ENCODE measurements at regions of chr1 and their contacts with region 1.

Region 1: DNA sequence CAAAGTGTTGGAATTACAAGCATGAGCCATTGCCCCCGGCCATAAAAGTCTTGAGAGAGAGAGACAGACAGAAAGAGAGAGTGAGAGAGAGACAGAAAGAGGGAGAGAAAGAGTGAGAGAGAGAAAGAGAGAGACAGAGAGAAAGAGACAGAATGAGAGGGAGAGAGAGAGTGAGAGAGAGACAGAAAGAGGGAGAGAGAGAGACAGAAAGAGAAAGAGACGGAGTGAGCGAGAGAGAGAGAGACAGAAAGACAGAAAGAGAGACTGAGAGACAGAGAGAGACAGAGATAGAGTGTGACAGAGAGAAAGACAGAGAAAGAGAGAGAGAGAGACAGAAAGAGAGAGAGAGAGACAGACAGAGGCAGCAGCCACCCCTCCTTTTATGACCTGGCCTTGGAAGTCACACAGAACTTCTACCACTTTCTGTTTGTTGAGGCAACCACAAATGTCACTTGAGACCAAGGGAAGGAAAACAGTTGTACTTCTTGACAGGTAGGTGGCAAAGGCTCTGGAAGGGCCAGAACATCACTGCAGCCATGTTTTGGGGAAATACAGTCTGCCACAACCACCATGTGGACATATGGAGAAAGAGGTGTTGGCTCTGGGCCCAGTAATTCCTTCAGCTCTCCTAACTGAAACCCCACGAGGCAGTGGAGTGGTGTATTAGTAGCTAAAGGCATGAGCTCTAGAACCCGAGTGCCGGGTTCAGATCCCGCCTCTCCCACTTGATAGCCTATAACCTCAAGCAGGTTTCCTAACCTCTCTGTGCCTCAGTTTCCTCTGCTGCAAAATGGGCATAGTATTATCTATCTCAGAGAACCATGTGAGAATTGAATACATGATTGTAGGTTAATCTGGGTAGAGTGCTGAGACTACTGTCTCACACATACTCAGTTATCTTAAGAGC is 50.6 kb downstream of the TNFRSF8 start:
- DNase-seq: no peak
- H3K4me3 ChIP-seq: no peak overlapping the region
- H3K4me3 Mint-ChIP-seq: no peak overlapping the region
- H3K27ac ChIP-seq: no peak overlapping the region
- H3K27ac Mint-ChIP-seq: no peak overlapping the region
- H3K4me1 ChIP-seq: peaks cover 4% of the 10 kb centered on the region
- H3K4me1 Mint-ChIP-seq: peaks cover 4 to 12% (median 8%) of the 10 kb centered on the region in 4 donors
- H3K27me3 ChIP-seq: no peaks in the 10 kb centered on the region
- H3K27me3 Mint-ChIP-seq: no peaks in the 10 kb centered on the region

Region 2: DNA sequence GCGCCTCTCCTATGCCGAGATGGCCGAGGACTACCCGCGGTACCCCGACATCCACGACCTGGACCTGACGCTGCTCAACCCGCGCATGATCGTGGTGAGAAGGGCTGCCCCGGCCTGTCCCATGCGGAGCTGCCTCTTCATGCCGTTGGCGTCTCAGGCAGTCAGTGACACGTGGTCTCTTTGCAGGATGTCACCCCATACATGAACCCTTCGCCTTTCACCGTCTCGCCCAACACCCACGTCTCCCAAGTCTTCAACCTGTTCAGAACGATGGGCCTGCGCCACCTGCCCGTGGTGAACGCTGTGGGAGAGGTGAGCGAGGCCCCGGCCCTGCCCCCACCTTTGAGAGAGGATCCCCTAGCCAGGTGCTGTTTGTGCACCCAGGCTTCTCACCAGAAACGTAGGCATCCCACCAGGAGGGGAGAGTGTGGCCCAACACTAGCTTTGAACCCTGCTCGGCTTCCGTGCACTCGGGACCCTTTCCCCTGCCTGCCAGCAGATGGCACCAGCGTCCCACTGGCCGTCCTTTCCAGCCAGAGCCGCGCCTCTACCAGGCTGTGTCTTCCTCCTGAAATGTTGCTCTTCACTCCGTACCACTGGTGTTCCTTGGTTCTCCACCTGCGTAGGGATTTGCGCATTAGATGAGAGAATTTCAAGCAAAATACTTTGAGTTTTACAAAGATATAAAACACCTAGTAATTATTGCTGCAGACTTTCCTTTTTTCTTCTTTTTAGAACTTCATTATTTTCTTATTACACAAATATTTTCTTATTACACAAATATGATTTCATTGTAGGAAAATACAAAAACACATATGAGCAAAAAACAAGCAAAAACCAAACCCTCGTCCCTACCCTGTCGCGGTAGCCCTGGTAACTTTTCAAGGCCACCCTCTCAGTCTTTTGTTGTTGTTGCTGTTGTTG is 275.1 kb before region 1 on chr1:
- CTCF ChIA-PET with region 1: no interaction called
- POLR2A ChIA-PET with region 1: no interaction called
- intact Hi-C with region 1: loop called (anchors 5 kb)
- DNase-seq: peak; percentile 65 to 74 (median 72)
- H3K4me3 ChIP-seq: no peak overlapping the region
- H3K4me3 Mint-ChIP-seq: no peak overlapping the region
- H3K27ac ChIP-seq: no peak overlapping the region
- H3K27ac Mint-ChIP-seq: peak overlapping the region in 1 of 7 donors; percentile 24
- H3K4me1 ChIP-seq: peaks cover 3% of the 10 kb centered on the region
- H3K4me1 Mint-ChIP-seq: peaks cover 2 to 6% (median 4%) of the 10 kb centered on the region in 4 donors
- H3K27me3 ChIP-seq: no peaks in the 10 kb centered on the region
- H3K27me3 Mint-ChIP-seq: no peaks in the 10 kb centered on the region

Region 3: DNA sequence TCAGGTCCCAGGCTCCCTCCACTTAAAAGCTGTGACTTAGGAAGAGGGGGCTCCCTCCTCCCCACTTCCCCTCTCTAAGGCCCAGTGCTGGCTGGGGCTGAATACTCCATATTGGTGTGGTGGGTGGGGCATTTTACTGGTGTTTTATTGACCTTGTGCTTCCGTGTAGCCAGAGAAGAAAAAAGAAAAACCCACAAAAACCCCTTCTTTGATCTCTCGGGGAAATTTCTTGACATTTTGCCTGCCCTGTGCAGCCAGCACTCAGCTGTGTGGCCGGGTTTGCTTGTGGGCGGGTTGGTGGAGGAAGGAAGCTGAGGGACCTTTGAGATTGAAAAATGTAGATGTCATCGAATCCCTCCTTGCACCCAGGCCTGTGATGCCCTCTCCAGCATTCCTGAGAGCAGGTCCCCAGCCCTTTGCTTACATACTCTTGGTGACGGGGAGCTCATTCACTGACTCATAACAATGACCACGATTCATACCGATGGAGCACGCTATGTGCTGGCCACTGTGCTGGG is 25.8 kb before region 1 on chr1:
- CTCF ChIA-PET with region 1: no interaction called
- POLR2A ChIA-PET with region 1: no interaction called
- intact Hi-C with region 1: loop called (anchors 1 kb)
- DNase-seq: peak; percentile 56 to 68 (median 60)
- H3K4me3 ChIP-seq: peak overlapping the region; percentile 12 to 47
- H3K4me3 Mint-ChIP-seq: peak overlapping the region; percentile 60 to 84 (median 78)
- H3K27ac ChIP-seq: peak overlapping the region; percentile 50
- H3K27ac Mint-ChIP-seq: peak overlapping the region; percentile 77 to 95 (median 90)
- H3K4me1 ChIP-seq: peaks cover 47% of the 10 kb centered on the region
- H3K4me1 Mint-ChIP-seq: peaks cover 39 to 54% (median 44%) of the 10 kb centered on the region in 4 donors
- H3K27me3 ChIP-seq: no peaks in the 10 kb centered on the region
- H3K27me3 Mint-ChIP-seq: no peaks in the 10 kb centered on the region

Region 4: DNA sequence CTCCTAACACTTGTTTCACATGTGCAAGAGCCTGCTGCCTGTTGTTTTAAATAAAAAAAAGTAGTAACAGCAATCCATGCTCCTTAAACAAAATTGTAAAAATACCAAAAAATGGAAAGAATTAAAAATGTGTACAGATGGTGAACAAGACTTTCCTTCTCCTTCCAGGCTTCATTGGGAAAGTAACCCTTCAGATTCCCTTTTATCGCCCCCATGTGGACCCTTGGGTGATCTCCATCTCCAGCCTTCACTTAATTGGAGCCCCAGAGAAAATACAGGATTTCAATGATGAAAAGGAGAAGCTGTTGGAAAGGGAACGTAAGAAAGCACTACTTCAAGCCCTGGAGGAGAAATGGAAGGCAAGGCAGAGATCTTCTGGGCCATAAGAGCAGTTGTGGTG is 130.4 kb after region 1 on chr1:
- CTCF ChIA-PET with region 1: interaction called, 169 read pairs
- POLR2A ChIA-PET with region 1: no interaction called
- intact Hi-C with region 1: loop called (anchors 1 kb)
- DNase-seq: peak in 2 of 5 donors; percentile 13 to 38
- H3K4me3 ChIP-seq: no peak overlapping the region
- H3K4me3 Mint-ChIP-seq: no peak overlapping the region
- H3K27ac ChIP-seq: no peak overlapping the region
- H3K27ac Mint-ChIP-seq: no peak overlapping the region
- H3K4me1 ChIP-seq: no peaks in the 10 kb centered on the region
- H3K4me1 Mint-ChIP-seq: peaks cover 0 to 13% (median 5%) of the 10 kb centered on the region in 4 donors
- H3K27me3 ChIP-seq: no peaks in the 10 kb centered on the region
- H3K27me3 Mint-ChIP-seq: no peaks in the 10 kb centered on the region

Region 5: GRCh38 chr1:12275369-12275768 is 161.7 kb after region 1 on chr1:
- CTCF ChIA-PET with region 1: interaction called, 13 read pairs
- POLR2A ChIA-PET with region 1: no interaction called
- intact Hi-C with region 1: loop called (anchors 1 kb)
- DNase-seq: peak in 4 of 5 donors; percentile 7 to 19 (median 14)
- H3K4me3 ChIP-seq: no peak overlapping the region
- H3K4me3 Mint-ChIP-seq: no peak overlapping the region
- H3K27ac ChIP-seq: no peak overlapping the region
- H3K27ac Mint-ChIP-seq: peak overlapping the region in 1 of 7 donors; percentile 82
- H3K4me1 ChIP-seq: no peaks in the 10 kb centered on the region
- H3K4me1 Mint-ChIP-seq: peaks cover 5 to 9% (median 8%) of the 10 kb centered on the region in 4 donors
- H3K27me3 ChIP-seq: no peaks in the 10 kb centered on the region
- H3K27me3 Mint-ChIP-seq: no peaks in the 10 kb centered on the region